Mammary epithelial cell (primary cell): ENCODE measurements at regions of chr3 and their contacts with region 1.

Region 1: DNA sequence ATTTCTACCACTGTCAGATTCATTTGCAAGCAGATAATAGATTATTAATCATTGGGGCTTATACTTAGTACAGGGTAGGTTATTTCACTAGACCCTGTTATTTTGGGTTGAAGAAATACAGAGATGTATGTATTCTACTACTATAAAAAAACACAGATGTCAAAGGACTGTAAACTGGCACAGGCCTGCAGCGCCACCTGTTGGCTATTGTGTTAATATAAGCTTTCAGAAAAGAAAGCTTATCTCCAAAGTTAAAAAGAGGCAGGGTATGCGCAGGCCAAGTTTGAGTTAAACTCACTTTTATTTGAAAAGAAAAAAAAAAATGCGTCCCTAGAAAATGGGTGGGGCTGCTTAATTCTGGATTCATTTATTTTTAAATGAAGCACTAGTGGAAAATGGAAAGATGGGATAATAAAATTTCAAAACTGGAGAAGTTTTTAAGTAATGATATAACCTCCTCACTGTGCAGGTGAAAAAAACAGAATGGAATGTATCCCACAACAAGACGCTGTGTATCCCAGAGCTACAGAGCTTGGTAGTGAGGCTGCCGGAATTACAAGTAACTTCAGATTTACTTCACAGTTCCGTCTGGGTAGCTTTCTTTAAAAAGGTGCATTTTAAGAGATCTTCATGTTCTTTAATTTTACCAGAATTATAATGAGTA is 407.2 kb upstream of the TGFBR2 start:
- DNase-seq: peak; percentile 21
- H3K4me3 ChIP-seq: no peak overlapping the region
- H3K27ac ChIP-seq: no peak overlapping the region
- H3K4me1 ChIP-seq: peaks cover 12% of the 10 kb centered on the region
- H3K27me3 ChIP-seq: no peaks in the 10 kb centered on the region
- CTCF ChIP-seq: peak; percentile 75

Region 2: GRCh38 chr3:30035935-30036567 is 163.2 kb before region 1 on chr3:
- CTCF ChIA-PET with region 1: no interaction called
- dilution Hi-C with region 1: loop called (anchors 25 kb)
- in situ Hi-C with region 1: loop called (anchors 10 to 25 kb)
- intact Hi-C with region 1: no loop called
- DNase-seq: no peak
- H3K4me3 ChIP-seq: no peak overlapping the region
- H3K27ac ChIP-seq: no peak overlapping the region
- H3K4me1 ChIP-seq: no peaks in the 10 kb centered on the region
- H3K27me3 ChIP-seq: no peaks in the 10 kb centered on the region
- CTCF ChIP-seq: no peak

Region 3: GRCh38 chr3:30112902-30113484 is 86.2 kb before region 1 on chr3:
- CTCF ChIA-PET with region 1: no interaction called
- dilution Hi-C with region 1: no loop called
- in situ Hi-C with region 1: no loop called
- intact Hi-C with region 1: loop called (anchors 1 kb)
- DNase-seq: peak; percentile 31
- H3K4me3 ChIP-seq: no peak overlapping the region
- H3K27ac ChIP-seq: no peak overlapping the region
- H3K4me1 ChIP-seq: peaks cover 2% of the 10 kb centered on the region
- H3K27me3 ChIP-seq: no peaks in the 10 kb centered on the region
- CTCF ChIP-seq: peak; percentile 58 to 63

Region 4: DNA sequence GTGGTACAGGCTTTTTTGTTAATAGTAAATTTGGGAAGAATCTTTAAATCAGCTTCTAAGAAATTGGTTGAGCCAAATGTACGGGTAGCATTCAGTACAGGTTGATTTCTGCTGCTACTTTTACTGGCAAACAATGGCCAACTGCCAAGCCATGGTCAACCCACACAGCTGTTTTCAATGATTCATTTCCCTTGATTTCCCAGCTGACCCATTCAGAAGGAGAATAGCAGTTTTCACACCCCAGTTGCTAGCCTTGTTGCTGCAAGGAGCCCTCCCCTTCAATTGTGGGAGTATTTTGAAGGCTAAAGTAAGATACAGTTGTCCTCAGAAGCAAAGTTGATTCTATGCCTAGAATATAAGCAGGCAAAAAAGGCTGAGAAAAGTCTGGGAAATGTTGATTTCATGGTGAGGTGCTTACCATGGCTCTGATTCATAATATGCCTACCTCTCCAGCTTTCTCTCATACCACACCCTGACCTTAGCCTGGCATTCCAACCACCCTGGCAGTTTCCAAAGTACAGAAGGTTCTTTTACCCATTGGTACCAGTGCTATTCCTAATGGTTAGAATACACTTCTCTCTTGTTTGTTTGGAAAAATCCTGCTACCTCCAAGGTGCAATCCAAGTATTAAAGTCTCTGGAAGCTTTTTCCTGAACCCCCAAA is 86.9 kb after region 1 on chr3:
- CTCF ChIA-PET with region 1: no interaction called
- dilution Hi-C with region 1: no loop called
- in situ Hi-C with region 1: no loop called
- intact Hi-C with region 1: loop called (anchors 2 kb)
- DNase-seq: peak; percentile 93
- H3K4me3 ChIP-seq: no peak overlapping the region
- H3K27ac ChIP-seq: peak overlapping the region; percentile 87
- H3K4me1 ChIP-seq: peaks cover 60% of the 10 kb centered on the region
- H3K27me3 ChIP-seq: no peaks in the 10 kb centered on the region
- CTCF ChIP-seq: no peak

Region 5: GRCh38 chr3:30393079-30393478 is 193.9 kb after region 1 on chr3:
- CTCF ChIA-PET with region 1: no interaction called
- dilution Hi-C with region 1: no loop called
- in situ Hi-C with region 1: no loop called
- intact Hi-C with region 1: no loop called
- DNase-seq: no peak
- H3K4me3 ChIP-seq: no peak overlapping the region
- H3K27ac ChIP-seq: no peak overlapping the region
- H3K4me1 ChIP-seq: no peaks in the 10 kb centered on the region
- H3K27me3 ChIP-seq: no peaks in the 10 kb centered on the region
- CTCF ChIP-seq: no peak

Region 6: GRCh38 chr3:30628901-30629590 is 429.8 kb after region 1 on chr3:
- CTCF ChIA-PET with region 1: no interaction called
- dilution Hi-C with region 1: no loop called
- in situ Hi-C with region 1: no loop called
- intact Hi-C with region 1: loop called (anchors 5 kb)
- DNase-seq: no peak
- H3K4me3 ChIP-seq: no peak overlapping the region
- H3K27ac ChIP-seq: peak overlapping the region; percentile 30
- H3K4me1 ChIP-seq: peaks cover 83% of the 10 kb centered on the region
- H3K27me3 ChIP-seq: no peaks in the 10 kb centered on the region
- CTCF ChIP-seq: peak; percentile 11 to 53

Region 7: DNA sequence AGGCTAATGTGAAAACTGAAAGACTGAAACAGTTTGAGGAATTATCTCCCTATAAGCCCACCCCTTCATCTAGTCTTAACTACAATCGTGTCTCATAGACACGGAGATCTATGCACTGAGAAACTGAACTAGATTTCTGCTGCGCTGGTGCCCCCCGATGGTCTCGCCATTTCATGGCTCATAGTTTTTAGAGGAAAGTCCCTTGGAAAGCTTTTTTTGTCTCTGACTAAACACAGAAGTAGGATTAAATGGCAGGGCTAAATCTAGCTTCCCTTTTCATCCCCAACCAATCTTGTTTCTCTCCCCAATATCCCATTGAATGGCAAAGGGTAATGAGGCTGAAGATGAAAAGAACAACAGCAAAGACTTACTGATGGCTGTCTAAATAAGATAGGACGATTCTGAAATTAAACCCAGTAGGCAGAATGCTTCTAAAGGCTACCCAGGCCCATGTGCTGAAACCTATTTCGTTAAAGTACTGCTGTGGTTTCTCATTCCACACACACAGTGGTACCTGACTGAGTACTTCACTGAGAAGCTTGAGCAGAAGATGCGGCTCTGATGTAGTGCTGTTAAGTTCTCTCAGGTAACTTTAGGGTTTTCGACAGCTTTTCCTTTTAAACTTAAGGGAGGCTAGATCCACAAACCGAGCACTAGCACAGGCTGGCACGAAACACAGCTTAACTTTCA is 552.5 kb after region 1 on chr3:
- CTCF ChIA-PET with region 1: interaction called, 3 read pairs
- dilution Hi-C with region 1: no loop called
- in situ Hi-C with region 1: no loop called
- intact Hi-C with region 1: loop called (anchors 1 kb)
- DNase-seq: peak; percentile 24
- H3K4me3 ChIP-seq: no peak overlapping the region
- H3K27ac ChIP-seq: no peak overlapping the region
- H3K4me1 ChIP-seq: peaks cover 31% of the 10 kb centered on the region
- H3K27me3 ChIP-seq: no peaks in the 10 kb centered on the region
- CTCF ChIP-seq: peak; percentile 19 to 22